ENCODE measurements at regions of chr11 and their contacts with region 1.

Region 1: DNA sequence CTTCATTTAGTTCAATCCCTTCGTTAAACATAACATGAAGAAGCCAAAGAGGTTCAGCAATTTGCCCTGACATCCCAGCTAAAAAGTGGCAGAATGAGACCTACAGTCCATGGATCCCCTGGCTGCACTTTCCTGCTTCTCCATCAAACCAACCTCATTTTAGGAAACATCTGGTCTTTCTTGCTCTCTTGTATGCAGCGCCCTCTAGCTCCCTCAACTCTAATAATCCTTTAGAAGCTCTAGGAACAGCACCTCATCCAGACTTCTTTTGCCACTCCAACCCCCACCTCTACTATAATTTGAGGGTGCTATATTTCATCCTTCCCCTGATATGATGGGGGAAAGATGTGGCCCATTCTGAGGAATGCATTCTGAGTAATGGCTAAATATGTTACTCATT is 7.4 kb downstream of the CNTF start:
- DNase-seq: no peak
- ATAC-seq: no peak
- H3K4me3 Mint-ChIP-seq: no peak overlapping the region
- H3K27ac Mint-ChIP-seq: no peak overlapping the region
- H3K4me1 Mint-ChIP-seq: no peaks in the 10 kb centered on the region
- H3K27me3 Mint-ChIP-seq: no peaks in the 10 kb centered on the region

Region 2: GRCh38 chr11:58567889-58568512 is 61.9 kb before region 1 on chr11:
- CTCF ChIA-PET with region 1: interaction called, 11 read pairs
- DNase-seq: peak; percentile 85
- ATAC-seq: peak; percentile 95
- H3K4me3 Mint-ChIP-seq: peak overlapping the region; percentile 38
- H3K27ac Mint-ChIP-seq: peak overlapping the region; percentile 78
- H3K4me1 Mint-ChIP-seq: peaks cover 71% of the 10 kb centered on the region
- H3K27me3 Mint-ChIP-seq: no peaks in the 10 kb centered on the region

Region 3: DNA sequence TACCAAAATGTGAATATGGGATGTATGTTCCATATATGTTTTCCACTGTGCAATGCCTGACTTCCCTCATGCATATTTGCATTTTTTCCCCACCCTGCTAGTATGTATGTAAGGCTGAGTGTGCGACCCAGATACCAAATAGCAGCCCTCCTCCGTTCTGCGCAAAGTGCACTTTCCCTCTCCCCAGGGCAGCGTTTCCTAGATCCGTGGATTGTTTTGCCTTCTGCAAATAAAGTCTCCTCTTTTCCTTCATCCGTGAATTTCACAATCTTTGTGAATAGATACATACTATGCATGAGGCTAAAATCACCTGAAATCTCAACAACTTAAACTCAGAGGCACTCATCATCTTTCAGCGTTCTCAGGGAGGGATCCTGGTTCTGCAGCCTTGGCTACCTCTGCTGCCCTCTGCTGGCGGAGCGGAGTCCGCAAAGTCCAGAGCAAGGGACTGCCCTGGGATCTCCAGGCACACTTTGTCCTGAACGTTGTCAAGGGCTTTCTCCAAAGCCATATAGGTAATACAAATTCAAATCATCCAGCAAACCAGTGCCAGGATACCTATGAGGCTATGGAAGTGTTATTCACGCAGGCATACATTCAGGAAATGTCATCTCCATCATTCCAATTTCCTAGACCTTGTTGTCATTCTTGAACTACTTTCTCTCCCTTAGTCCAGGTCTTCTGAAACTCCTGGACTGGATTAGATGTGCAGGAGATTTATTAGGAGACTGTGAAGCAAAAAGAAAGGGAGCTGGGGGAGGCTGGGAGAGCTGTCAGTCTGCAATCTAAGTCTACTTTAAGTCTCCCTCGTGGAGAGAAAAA is 45.7 kb after region 1 on chr11:
- CTCF ChIA-PET with region 1: no interaction called
- DNase-seq: peak; percentile 75
- ATAC-seq: peak; percentile 93
- H3K4me3 Mint-ChIP-seq: no peak overlapping the region
- H3K27ac Mint-ChIP-seq: no peak overlapping the region
- H3K4me1 Mint-ChIP-seq: no peaks in the 10 kb centered on the region
- H3K27me3 Mint-ChIP-seq: no peaks in the 10 kb centered on the region

Measured in activated CD8-positive, alpha-beta memory T cell treated with anti-CD3 and anti-CD28 coated beads, Interleukin-2, amount 10 ng/mL, durations not matched to agents 7 days and 5 days (primary cell).